ENCODE measurements at regions of chr3 and their contacts with region 1.

Region 1: DNA sequence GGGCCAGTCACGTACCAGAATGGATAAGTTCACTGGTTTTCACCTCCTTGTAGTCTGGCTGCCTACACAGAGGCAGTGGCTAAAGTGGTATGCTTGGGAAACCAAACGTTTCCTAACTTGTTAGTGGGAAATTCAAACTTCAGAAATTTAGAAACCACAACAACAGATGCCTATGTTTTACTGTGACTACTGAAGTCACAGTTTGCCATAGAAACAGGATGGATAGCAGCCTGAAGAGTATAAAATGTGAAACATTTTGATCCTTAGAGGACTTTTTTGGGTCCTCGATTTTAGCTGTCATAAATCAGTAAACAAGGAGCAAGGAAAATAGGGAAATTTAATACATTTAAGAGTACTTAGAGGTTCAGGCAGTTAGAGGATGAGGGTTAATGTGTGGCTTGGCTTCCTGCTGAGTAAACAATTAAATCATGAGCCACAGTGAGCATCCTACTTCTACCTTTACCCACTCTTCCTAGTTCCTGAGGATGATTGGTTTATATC is 48.6 kb downstream of the CMSS1 start:
- DNase-seq: peak; percentile 81
- H3K4me3 Mint-ChIP-seq: peak overlapping the region; percentile 71
- H3K27ac Mint-ChIP-seq: peak overlapping the region; percentile 87
- H3K4me1 Mint-ChIP-seq: peaks cover 72% of the 10 kb centered on the region
- H3K27me3 Mint-ChIP-seq: no peaks in the 10 kb centered on the region

Region 2: DNA sequence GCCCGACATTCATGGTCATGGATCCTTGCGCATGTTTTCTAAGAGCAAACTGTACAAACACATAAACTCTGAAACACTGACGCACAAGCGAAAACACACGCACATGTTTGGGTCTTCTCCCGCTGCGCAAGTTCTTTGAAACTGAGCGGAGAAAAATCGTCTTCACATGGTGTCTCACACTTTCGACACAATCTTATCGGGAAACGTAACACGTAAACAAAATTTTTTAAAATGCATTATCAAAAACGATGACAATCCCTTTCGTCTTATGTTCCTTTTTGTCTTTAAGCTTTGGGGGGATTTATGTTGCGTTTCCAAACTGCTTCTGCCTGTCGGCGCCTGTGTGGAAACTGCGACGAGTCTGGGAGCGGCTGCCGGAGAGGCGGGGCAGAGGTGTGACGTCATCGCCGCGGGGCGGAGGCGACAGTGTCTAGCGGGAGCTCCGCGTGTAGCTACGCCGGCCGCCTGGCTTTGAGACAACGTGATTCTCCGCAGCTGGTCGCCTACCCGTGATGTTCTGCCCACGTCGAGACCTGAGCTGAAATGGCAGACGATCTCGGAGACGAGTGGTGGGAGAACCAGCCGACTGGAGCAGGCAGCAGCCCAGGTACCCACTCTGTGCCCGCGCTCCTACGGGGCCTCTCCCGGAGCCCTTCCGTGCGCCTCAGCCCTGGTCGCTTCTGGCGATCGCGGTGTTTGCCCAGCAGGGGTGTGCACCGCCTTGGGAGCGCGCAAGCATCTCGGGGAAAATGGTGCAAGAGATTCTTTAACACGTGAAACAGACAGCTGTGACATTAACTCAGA is 48.7 kb before region 1 on chr3 and contains the start of gene CMSS1:
- intact Hi-C with region 1: loop called (anchors 2 kb)
- DNase-seq: peak; percentile 99
- H3K4me3 Mint-ChIP-seq: peak within 1 kb of the TSS; percentile 100
- H3K27ac Mint-ChIP-seq: peak within 1 kb of the TSS; percentile 99
- H3K4me1 Mint-ChIP-seq: peaks cover 31% of the 10 kb centered on the region
- H3K27me3 Mint-ChIP-seq: peaks cover 2% of the 10 kb centered on the region
- total RNA-seq, gene CMSS1: 117 and 126 TPM in 2 replicates

Region 3: GRCh38 chr3:99842826-99843589 is 23.3 kb before region 1 on chr3:
- intact Hi-C with region 1: no loop called
- DNase-seq: no peak
- H3K4me3 Mint-ChIP-seq: no peak overlapping the region
- H3K27ac Mint-ChIP-seq: peak overlapping the region; percentile 49
- H3K4me1 Mint-ChIP-seq: peaks cover 18% of the 10 kb centered on the region
- H3K27me3 Mint-ChIP-seq: no peaks in the 10 kb centered on the region

Region 4: GRCh38 chr3:99970198-99970597 is 103.9 kb after region 1 on chr3:
- intact Hi-C with region 1: loop called (anchors 2 kb)
- DNase-seq: peak; percentile 59
- H3K4me3 Mint-ChIP-seq: no peak overlapping the region
- H3K27ac Mint-ChIP-seq: no peak overlapping the region
- H3K4me1 Mint-ChIP-seq: peaks cover 24% of the 10 kb centered on the region
- H3K27me3 Mint-ChIP-seq: no peaks in the 10 kb centered on the region

Region 5: GRCh38 chr3:100060685-100061484 is 194.6 kb after region 1 on chr3:
- intact Hi-C with region 1: no loop called
- DNase-seq: peak; percentile 53
- H3K4me3 Mint-ChIP-seq: no peak overlapping the region
- H3K27ac Mint-ChIP-seq: no peak overlapping the region
- H3K4me1 Mint-ChIP-seq: peaks cover 9% of the 10 kb centered on the region
- H3K27me3 Mint-ChIP-seq: no peaks in the 10 kb centered on the region

Region 6: DNA sequence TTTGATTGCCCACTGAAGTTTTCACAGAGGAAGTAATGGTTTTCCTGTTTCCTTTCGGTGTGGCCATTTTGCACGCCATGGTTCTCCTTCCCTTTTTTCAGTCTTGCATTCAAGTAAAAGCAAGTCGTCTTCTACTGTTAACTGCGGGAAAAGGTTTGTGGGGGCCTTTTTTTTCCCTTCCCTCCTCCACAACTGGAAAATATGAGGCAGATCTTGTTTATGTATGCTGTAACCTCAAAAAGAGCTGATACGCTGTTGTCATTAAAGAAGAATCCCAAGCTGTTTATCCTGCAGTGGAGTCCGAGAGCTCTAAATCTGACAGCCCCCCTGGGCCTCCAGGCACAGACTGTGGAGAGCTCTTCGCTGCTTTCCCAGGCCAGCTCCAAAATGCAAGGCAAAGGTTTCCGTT is 207.6 kb after region 1 on chr3:
- intact Hi-C with region 1: loop called (anchors 5 kb)
- DNase-seq: peak; percentile 79
- H3K4me3 Mint-ChIP-seq: peak overlapping the region; percentile 79
- H3K27ac Mint-ChIP-seq: peak overlapping the region; percentile 92
- H3K4me1 Mint-ChIP-seq: peaks cover 60% of the 10 kb centered on the region
- H3K27me3 Mint-ChIP-seq: no peaks in the 10 kb centered on the region

Measured in activated CD4-positive, alpha-beta T cell treated with anti-CD3 and anti-CD28 coated beads, Interleukin-2, amount 10 ng/mL, durations not matched to agents 24 days and 14 days (primary cell).